Activated CD4-positive, alpha-beta memory T cell treated with anti-CD3 and anti-CD28 coated beads, Interleukin-2, amount 10 ng/mL, durations not matched to agents 7 days and 5 days (primary cell): ENCODE measurements at regions of chr13 and their contacts with region 1.

Region 1: GRCh38 chr13:48222358-48223301 is 10.4 kb upstream of the ITM2B start:
- DNase-seq: no peak
- H3K4me3 Mint-ChIP-seq: peak overlapping the region; percentile 30
- H3K27ac Mint-ChIP-seq: no peak overlapping the region
- H3K4me1 Mint-ChIP-seq: peaks cover 34% of the 10 kb centered on the region
- H3K27me3 Mint-ChIP-seq: peaks cover 36% of the 10 kb centered on the region

Region 2: DNA sequence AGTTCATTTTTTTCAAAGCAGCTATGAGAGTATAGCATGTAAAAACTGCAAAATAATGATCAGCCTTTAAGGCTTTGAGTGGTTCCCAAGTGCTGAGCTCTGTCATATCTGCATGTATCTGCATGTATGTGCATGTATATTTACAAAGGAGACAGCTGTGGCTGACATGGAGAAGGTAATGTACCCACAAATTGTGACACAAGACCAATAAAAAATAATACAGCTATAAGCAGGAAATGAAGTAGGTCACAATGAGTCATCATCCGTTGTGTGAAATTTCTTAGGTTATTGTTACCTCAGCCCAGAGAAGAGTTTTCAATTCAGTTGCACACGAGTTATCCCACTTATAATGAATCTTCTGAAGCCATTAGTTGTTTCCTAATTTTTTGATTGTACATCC is 66.8 kb before region 1 on chr13:
- CTCF ChIA-PET with region 1: interaction called, 6 read pairs
- POLR2A ChIA-PET with region 1: interaction called, 11 read pairs
- DNase-seq: peak; percentile 17
- H3K4me3 Mint-ChIP-seq: peak overlapping the region; percentile 3
- H3K27ac Mint-ChIP-seq: peak overlapping the region; percentile 86
- H3K4me1 Mint-ChIP-seq: peaks cover 61% of the 10 kb centered on the region
- H3K27me3 Mint-ChIP-seq: no peaks in the 10 kb centered on the region

Region 3: GRCh38 chr13:48233046-48233907 is 10.6 kb after region 1 on chr13 and contains the start of gene ITM2B:
- CTCF ChIA-PET with region 1: interaction called, 16 read pairs
- POLR2A ChIA-PET with region 1: interaction called, 46 read pairs
- DNase-seq: peak; percentile 65
- H3K4me3 Mint-ChIP-seq: peak within 1 kb of the TSS; percentile 90
- H3K27ac Mint-ChIP-seq: peak within 1 kb of the TSS; percentile 86
- H3K4me1 Mint-ChIP-seq: peaks cover 40% of the 10 kb centered on the region
- H3K27me3 Mint-ChIP-seq: peaks cover 31% of the 10 kb centered on the region
- total RNA-seq, gene ITM2B: 226 to 227 TPM